Psoas muscle (tissue), 8 donors: ENCODE measurements at regions of chr16 and their contacts with region 1.

Region 1: DNA sequence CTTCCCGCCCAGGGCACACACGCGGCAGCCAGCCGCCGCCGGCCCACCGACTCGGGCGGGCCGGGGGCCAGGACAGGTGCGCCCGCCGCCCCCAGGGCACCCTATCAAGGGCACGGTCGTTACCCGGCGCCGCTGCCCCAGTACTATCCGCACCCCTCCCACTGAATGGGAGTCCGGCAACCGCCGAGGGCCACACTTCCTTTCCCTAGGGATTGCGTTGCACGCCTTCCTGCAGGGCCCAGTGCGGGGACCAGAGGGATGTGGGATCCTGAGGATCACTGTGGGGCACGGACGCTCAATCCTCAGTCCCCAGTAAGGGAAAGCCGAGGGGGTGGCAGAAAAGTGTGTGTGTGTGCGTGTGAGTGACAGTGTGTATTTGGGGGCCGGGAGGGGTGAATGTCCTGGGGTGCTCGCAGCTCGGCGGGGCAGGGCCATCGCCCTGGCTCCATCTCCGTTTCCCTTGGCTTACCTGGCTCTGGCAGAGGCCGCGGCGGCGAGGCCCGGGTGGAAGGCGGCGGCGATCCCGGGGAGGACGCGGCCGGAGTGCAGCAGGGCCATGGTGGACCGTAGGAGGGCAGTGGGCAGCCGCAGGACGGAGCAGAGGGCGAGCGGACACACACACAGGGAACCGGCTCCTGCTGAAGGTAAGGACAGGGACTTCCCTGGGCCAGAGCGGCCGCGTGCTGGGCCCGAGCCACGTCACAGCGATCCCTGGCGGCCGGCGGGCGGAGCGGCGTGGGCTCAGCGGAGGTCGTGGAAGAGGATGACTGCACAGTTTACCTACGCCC is at the start of gene GOT2:
- DNase-seq: peak; percentile 81 to 89
- ATAC-seq: peak; percentile 95 to 96 (median 96)
- H3K4me3 ChIP-seq: peak within 1 kb of the TSS; percentile 93
- H3K27ac ChIP-seq: peak within 1 kb of the TSS; percentile 85
- H3K4me1 ChIP-seq: peaks cover 42% of the 10 kb centered on the region
- H3K27me3 ChIP-seq: no peaks in the 10 kb centered on the region
- CTCF ChIP-seq: peak; percentile 86
- total RNA-seq, gene GOT2: 183 to 396 (median 274) TPM

Region 2: GRCh38 chr16:58684354-58685083 is 49.3 kb before region 1 on chr16 and contains the start of gene SLC38A7:
- intact Hi-C with region 1: loop called in 1 of 2 experiments (anchors 2 kb)
- DNase-seq: peak; percentile 90 to 94
- ATAC-seq: peak; percentile 94 to 99 (median 96)
- H3K4me3 ChIP-seq: peak within 1 kb of the TSS; percentile 95
- H3K27ac ChIP-seq: peak within 1 kb of the TSS; percentile 89
- H3K4me1 ChIP-seq: peaks cover 10% of the 10 kb centered on the region
- H3K27me3 ChIP-seq: no peaks in the 10 kb centered on the region
- CTCF ChIP-seq: no peak
- total RNA-seq, gene SLC38A7: 6.6 to 12.6 (median 8.2) TPM